ENCODE measurements at regions of chr1 and their contacts with region 1.

Region 1: DNA sequence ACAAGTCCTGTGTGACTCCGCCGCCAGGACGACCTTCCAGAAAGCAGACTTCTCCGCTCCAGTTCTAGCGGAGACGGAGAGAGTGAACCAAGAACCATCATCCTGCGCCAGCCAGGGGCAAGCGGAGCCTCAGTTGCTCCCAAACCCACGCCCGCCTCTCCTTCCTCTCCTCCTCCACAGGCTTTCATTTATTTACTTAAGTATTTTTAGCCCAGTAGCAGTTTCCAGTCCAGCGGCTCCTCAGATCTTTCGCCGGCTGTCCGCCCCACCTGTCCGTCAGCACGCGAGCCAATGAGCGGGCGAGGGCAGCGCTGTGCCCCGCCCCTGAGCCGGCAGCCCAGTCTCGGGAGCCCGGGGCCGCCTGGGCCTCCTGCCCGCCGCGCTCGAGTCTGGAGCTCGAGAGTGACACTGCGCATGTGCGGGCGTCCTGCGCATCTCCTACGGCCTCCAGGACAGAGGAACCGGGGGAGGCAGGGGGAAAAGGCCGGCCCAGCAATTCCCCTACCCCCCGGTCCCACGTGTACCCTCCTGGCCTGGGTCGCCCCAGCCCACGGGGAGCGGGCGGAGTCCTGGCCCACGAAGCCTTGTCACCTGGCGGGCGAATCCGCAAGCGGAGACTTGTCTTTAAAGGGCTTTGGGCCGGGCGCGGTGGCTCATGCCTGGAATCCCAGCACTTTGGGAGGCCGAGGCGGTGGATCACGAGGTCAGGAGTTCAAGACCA is at the start of gene FALEC:
- DNase-seq: peak; percentile 81 to 93 (median 88)
- ATAC-seq: peak; percentile 98
- H3K4me3 Mint-ChIP-seq: peak within 1 kb of the TSS; percentile 89 to 94 (median 93)
- H3K27ac Mint-ChIP-seq: peak within 1 kb of the TSS; percentile 48 to 95 (median 87)
- H3K4me1 Mint-ChIP-seq: peaks cover 12 to 22% (median 19%) of the 10 kb centered on the region in 4 donors
- H3K27me3 Mint-ChIP-seq: no peaks in the 10 kb centered on the region
- polyA plus RNA-seq, gene FALEC: 0.38 to 1.3 TPM in 2 of 3 donors, not detected in the other

Region 2: DNA sequence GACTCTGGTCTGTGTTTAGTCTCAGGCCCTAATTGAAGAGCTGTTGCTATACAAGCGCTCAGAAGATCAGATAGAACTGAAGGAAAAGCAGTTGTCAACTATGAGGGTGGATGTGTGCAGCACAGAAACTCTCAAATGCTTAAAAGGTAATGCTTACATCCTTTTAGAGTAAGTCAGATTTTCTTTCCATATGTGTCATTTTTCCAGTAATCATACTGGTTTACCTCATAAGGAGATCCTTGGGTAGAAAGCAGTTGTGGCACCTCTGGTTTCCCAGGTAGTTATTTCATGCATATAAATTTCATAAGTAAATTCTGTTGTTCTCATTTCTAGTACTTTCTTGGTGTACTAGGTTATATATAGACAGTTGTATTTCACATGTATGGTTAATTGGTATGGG is 71.3 kb before region 1 on chr1:
- POLR2A ChIA-PET with region 1: no interaction called
- DNase-seq: no peak
- ATAC-seq: no peak
- H3K4me3 Mint-ChIP-seq: no peak overlapping the region
- H3K27ac Mint-ChIP-seq: peak overlapping the region in 1 of 10 donors; percentile 56
- H3K4me1 Mint-ChIP-seq: peaks cover 0 to 11% (median 3%) of the 10 kb centered on the region in 4 donors
- H3K27me3 Mint-ChIP-seq: no peaks in the 10 kb centered on the region

Region 3: DNA sequence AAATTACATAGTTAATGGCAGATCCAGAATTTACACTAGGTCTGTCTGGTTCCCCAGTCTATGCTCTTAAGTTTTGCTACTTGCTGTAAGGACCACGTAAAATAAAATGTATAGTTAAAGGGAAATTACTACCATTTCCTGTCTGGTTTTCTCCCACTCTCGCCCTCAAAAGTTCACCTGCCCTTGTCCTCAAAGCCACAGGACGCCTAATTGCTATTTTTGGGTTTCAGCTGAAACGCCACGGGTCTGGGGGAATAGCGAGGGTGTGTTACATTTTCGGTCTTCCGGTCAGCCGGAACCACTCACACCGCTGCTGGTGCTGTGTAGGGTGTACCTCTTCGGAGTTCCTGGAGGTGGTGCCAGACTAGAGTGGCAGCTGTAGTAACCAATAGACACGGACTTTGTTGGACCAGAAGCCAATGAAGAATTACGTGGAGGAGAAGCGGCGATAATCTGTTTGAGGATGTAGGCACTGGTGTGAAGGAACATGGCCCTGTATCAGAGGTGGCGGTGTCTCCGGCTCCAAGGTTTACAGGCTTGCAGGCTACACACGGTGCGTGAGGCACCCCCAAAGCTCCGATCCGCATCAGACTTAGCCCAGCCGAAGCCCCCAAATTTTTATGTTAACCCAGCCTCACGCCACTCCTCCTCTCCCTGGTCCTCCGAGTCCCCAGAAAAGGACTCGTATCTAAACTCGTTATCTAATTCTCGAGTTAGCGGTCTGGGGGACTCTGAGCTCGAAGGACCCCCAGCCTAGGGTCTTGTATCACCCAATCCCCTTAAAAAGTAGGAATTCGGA is 28.3 kb before region 1 on chr1 and contains the start of gene TARS2:
- POLR2A ChIA-PET with region 1: interaction called, 11 read pairs
- DNase-seq: peak; percentile 76 to 99 (median 96)
- ATAC-seq: peak; percentile 100
- H3K4me3 Mint-ChIP-seq: peak within 1 kb of the TSS; percentile 90 to 100 (median 100)
- H3K27ac Mint-ChIP-seq: peak within 1 kb of the TSS; percentile 96 to 100 (median 99)
- H3K4me1 Mint-ChIP-seq: peaks cover 8 to 23% (median 20%) of the 10 kb centered on the region in 4 donors
- H3K27me3 Mint-ChIP-seq: no peaks in the 10 kb centered on the region
- polyA plus RNA-seq, gene TARS2: 23.9 to 37.2 (median 30.6) TPM

Region 4: DNA sequence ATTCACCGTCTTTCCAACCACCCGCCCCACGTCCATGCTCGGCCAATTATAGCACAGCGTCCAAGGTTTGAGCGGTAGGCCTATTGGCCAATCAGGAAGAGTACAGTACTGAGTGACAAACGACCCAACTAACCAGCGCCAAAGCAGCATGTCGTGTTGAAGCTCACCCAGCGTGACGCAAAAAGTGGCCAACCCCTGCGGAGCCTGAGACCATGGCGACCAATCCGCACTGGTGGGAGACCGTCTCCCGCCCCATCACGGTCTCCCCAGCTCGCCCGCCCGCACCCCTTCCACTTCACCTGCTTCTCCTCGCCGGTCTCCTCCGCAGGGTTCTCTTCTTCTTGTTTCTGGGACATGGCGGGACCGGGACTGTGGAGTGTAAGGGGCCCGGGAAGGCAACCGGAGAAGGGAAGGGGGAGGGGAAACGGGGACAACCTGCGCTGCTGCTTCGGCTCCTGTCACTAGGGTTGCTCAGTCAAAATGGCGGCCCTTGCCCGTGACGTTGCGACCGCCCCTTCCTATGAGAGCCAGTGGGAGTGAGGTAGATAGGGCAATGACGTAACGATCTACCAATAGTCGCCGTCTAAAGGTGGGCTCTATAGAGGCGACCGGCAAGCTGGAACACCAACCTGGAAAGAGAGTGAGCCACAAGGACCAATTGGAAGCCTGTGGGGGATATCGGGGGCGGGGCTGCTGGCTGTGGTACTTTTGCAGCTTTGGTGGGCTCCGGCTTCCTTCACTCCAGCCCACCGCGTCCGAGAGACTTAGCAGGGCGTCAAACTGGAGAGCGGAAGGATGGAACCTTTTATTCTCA is 113.8 kb after region 1 on chr1 and contains the start of gene ENSA:
- POLR2A ChIA-PET with region 1: interaction called, 12 read pairs
- DNase-seq: peak; percentile 86 to 99 (median 96)
- ATAC-seq: peak; percentile 86 to 88
- H3K4me3 Mint-ChIP-seq: no peak within 1 kb of the TSS
- H3K27ac Mint-ChIP-seq: no peak within 1 kb of the TSS
- H3K4me1 Mint-ChIP-seq: peaks cover 12 to 20% (median 18%) of the 10 kb centered on the region in 4 donors
- H3K27me3 Mint-ChIP-seq: no peaks in the 10 kb centered on the region
- polyA plus RNA-seq, gene ENSA: 55.2 to 64.4 (median 63.7) TPM

Measured in naive thymus-derived CD8-positive, alpha-beta T cell (primary cell).